Heart right ventricle (tissue), 16 donors: ENCODE measurements at regions of chr13 and their contacts with region 1.

Region 1: DNA sequence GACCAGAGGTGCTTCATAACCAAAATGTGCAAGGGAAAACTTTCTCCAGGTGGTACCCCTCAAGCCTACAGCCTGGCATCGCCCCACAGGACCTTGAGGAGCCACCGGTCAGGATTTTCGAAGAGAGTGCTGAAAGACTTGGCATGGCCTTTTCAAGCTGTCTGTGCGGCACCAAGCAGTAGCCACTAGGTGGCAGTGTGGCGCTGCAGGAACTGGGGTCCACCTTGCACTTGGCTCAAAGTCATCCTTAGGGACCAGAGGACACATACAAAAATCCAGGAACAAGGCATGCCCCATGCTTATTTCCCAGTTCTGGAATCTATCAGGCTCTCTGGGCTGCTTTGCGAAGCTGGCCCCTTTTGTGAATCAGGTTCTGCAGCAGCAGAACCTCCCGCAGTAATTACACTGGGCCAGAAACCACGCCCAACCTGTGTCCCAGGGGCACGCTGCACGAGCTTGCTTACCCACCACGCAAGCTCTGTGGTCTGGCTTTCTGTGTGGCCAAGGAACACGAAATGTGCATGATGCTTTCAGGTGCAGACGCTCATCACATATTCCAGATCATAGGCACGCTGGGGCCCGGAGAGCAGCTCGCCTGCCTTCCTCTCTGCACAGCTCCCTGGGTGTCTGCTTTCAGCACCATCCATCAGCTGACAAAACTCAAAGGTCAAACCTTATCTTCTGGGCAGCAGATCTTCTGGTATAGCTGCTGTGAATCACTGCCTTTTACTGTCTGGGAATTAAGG is 87.2 kb downstream of the SLC7A1 start:
- DNase-seq: peak; percentile 84 to 87
- ATAC-seq: peak; percentile 81 to 96 (median 90)
- H3K4me3 ChIP-seq: peak overlapping the region in 2 of 10 donors; percentile 16 to 18
- H3K27ac ChIP-seq: peak overlapping the region in 5 of 10 donors; percentile 0 to 49 (median 35)
- H3K4me1 ChIP-seq: peaks cover 5 to 26% (median 18%) of the 10 kb centered on the region in 9 donors
- H3K27me3 ChIP-seq: peaks cover 0 to 28% (median 8%) of the 10 kb centered on the region in 7 donors
- CTCF ChIP-seq: peak in 7 of 9 donors; percentile 92 to 99 (median 98)

Region 2: DNA sequence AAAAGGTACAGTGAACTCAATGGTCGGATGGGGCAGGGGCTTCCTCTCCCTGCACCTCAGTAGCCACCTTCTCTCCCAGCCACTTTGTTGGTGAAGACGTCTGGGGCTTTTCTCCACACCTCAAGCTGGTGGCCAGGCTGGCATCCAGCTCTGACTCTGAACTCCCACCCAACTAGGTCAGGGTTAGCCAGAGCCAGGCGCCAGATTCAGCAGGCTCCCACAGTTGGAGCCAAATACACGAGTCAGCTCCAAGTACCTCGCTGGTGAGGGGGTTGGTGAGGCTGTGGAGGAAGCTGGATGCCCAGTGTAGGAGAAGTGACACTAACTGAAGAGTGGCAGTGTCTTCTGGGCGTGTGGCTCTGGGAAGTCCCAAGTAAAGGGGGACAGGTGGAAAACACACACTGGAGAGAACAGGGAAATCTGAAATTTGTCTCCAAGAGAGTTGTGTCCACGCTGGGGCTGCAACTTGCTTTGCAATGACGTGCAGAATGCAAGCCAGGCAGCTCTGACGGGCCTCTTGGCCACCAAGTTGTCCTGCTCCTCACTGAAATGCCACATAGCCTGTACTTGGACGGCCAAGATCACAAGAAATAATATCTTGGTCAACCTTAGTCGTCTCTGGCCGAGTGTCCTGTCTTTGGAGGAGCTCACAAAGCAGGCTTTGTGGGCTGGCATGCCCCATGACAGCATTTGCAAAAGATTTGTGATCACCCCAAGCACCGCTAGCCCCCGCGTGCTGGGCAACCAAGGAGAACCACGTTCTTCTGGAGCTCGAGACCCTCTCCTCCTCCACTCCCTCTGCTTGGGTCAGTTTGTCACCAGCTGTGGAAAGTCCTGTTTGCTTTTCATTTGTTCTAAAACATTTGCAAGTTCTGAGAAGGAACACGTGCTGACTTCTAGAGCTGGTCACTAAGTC is 69.1 kb after region 1 on chr13:
- intact Hi-C with region 1: loop called in 1 of 10 experiments (anchors 5 kb)
- DNase-seq: peak in 1 of 2 donors; percentile 38
- ATAC-seq: peak; percentile 48 to 83 (median 72)
- H3K4me3 ChIP-seq: no peak overlapping the region
- H3K27ac ChIP-seq: peak overlapping the region in 1 of 10 donors; percentile 21
- H3K4me1 ChIP-seq: peaks cover 7 to 64% (median 29%) of the 10 kb centered on the region in 9 donors
- H3K27me3 ChIP-seq: no peaks in the 10 kb centered on the region
- CTCF ChIP-seq: no peak

Region 3: GRCh38 chr13:29595380-29596063 is 87.2 kb after region 1 on chr13 and contains the start of gene SLC7A1:
- intact Hi-C with region 1: loop called in 2 of 10 experiments (anchors 5 kb)
- DNase-seq: peak; percentile 44 to 77
- ATAC-seq: peak; percentile 87 to 94 (median 92)
- H3K4me3 ChIP-seq: peak within 1 kb of the TSS; percentile 63 to 91 (median 82)
- H3K27ac ChIP-seq: peak within 1 kb of the TSS; percentile 67 to 90 (median 82)
- H3K4me1 ChIP-seq: peaks cover 3 to 20% (median 12%) of the 10 kb centered on the region in 9 donors
- H3K27me3 ChIP-seq: peaks cover 0 to 11% (median 0%) of the 10 kb centered on the region in 7 donors
- CTCF ChIP-seq: peak in 1 of 9 donors; percentile 3
- total RNA-seq, gene SLC7A1: 11.4 to 29.2 (median 17.4) TPM

Region 4: DNA sequence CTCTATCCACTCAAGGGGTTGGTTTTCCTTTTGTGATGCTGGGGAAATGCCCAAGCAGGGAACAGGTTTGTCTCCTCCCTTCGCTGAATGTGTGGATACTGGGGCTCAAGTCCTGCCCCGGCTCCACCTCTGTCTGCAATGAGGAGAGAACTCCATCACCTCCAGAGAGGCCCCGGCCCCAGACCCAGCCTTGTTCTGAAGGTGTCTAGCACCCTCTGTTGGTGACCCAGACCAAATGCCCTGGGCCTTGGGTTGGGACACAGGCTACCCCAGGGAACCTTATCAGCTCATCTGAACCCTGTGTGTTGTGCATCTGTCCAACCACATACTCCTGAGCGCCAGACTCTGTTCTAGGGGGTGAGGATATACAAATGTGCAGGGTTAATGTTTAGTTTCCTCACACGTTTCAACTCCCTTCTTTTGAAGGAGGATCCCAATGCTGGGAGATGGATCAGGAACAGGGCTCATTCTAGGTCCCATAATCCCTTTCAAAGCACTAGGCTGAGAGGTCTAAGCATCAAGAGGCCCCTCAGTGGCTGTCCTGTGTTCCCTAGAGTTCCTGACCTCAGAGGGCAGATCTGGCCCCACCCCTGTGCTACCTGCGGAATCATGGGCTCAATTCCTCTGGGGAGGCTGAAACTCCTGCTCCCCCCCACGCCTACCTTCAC is 199.7 kb after region 1 on chr13:
- intact Hi-C with region 1: loop called (anchors 1 to 5 kb)
- DNase-seq: no peak
- ATAC-seq: peak; percentile 44 to 76 (median 64)
- H3K4me3 ChIP-seq: no peak overlapping the region
- H3K27ac ChIP-seq: no peak overlapping the region
- H3K4me1 ChIP-seq: peaks cover 0 to 19% (median 11%) of the 10 kb centered on the region in 9 donors
- H3K27me3 ChIP-seq: peaks cover 0 to 6% (median 0%) of the 10 kb centered on the region in 7 donors
- CTCF ChIP-seq: peak in 8 of 9 donors; percentile 14 to 64 (median 58)

Region 5: GRCh38 chr13:29850224-29850898 is 342.1 kb after region 1 on chr13 and contains the start of gene UBL3:
- intact Hi-C with region 1: loop called in 2 of 10 experiments (anchors 5 to 10 kb)
- DNase-seq: peak; percentile 96 to 97
- ATAC-seq: peak; percentile 95 to 99 (median 98)
- H3K4me3 ChIP-seq: peak within 1 kb of the TSS; percentile 62 to 98 (median 92)
- H3K27ac ChIP-seq: peak within 1 kb of the TSS; percentile 94 to 99 (median 98)
- H3K4me1 ChIP-seq: peaks cover 0 to 40% (median 19%) of the 10 kb centered on the region in 9 donors
- H3K27me3 ChIP-seq: no peaks in the 10 kb centered on the region
- CTCF ChIP-seq: no peak
- total RNA-seq, gene UBL3: 18.3 to 24.3 (median 21.0) TPM

Region 6: GRCh38 chr13:29923554-29924481 is 415.5 kb after region 1 on chr13:
- intact Hi-C with region 1: loop called in 2 of 10 experiments (anchors 10 kb)
- DNase-seq: peak; percentile 34 to 42
- ATAC-seq: peak; percentile 52 to 85 (median 80)
- H3K4me3 ChIP-seq: no peak overlapping the region
- H3K27ac ChIP-seq: peak overlapping the region in 9 of 10 donors; percentile 9 to 72 (median 34)
- H3K4me1 ChIP-seq: peaks cover 12 to 38% (median 26%) of the 10 kb centered on the region in 9 donors
- H3K27me3 ChIP-seq: no peaks in the 10 kb centered on the region
- CTCF ChIP-seq: peak; percentile 40 to 87 (median 75)

Region 7: GRCh38 chr13:30114571-30115256 is 606.4 kb after region 1 on chr13:
- intact Hi-C with region 1: loop called (anchors 1 to 5 kb)
- DNase-seq: peak; percentile 85 to 91
- ATAC-seq: peak; percentile 81 to 90 (median 87)
- H3K4me3 ChIP-seq: peak overlapping the region in 9 of 10 donors; percentile 51 to 69 (median 58)
- H3K27ac ChIP-seq: peak overlapping the region in 4 of 10 donors; percentile 22 to 53 (median 32)
- H3K4me1 ChIP-seq: peaks cover 0 to 30% (median 21%) of the 10 kb centered on the region in 9 donors
- H3K27me3 ChIP-seq: peaks cover 0 to 23% (median 10%) of the 10 kb centered on the region in 7 donors
- CTCF ChIP-seq: peak; percentile 75 to 95 (median 88)